BJ (cell line): ENCODE measurements at regions of chr7 and their contacts with region 1.

Region 1: GRCh38 chr7:98086281-98086718 is 20.4 kb upstream of the LMTK2 start:
- DNase-seq: no peak
- H3K4me3 ChIP-seq: no peak overlapping the region
- H3K27me3 ChIP-seq: no peaks in the 10 kb centered on the region
- CTCF ChIP-seq: no peak

Region 2: DNA sequence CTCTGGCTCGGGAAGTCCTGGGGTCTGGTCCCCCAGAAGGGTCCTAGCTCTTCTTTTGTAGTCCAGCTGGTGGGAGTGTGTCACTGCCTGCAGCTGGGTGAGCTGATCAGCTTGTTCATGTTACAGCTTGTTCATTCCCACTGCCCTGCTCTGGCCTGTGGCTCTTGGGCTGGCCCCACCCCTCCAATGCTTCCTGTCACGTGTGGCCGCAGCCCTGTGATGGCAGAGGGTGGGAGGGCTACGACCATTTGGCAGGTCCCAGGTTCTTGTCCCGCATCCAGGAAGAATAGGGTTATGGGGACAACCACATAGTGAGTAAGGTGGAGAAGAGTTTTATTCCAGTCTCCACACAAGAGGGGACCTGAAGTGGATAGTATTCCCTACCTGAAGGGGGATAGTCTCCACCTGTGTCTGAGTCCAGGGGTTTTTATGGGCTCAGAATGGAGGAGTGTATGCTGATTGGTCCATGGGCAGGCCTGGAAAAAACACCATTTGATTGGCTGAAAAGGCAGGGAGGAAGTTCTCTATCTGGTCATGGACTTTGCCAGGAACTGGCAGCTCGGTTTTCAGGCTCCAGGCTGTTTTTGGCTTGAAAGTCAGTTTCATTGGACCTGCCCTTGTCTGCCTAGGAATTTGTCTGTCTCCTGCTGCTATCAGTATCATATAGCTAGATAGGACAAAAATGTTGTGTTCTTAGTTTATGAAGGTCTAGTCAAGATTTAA is 955.7 kb before region 1 on chr7:
- CTCF ChIA-PET with region 1: no interaction called
- POLR2A ChIA-PET with region 1: interaction called, 23 read pairs
- DNase-seq: no peak
- H3K4me3 ChIP-seq: no peak overlapping the region
- H3K27me3 ChIP-seq: no peaks in the 10 kb centered on the region
- CTCF ChIP-seq: no peak

Region 3: GRCh38 chr7:98075801-98076200 is 10.5 kb before region 1 on chr7:
- CTCF ChIA-PET with region 1: no interaction called
- POLR2A ChIA-PET with region 1: no interaction called
- DNase-seq: no peak
- H3K4me3 ChIP-seq: no peak overlapping the region
- H3K27me3 ChIP-seq: no peaks in the 10 kb centered on the region
- CTCF ChIP-seq: no peak

Region 4: DNA sequence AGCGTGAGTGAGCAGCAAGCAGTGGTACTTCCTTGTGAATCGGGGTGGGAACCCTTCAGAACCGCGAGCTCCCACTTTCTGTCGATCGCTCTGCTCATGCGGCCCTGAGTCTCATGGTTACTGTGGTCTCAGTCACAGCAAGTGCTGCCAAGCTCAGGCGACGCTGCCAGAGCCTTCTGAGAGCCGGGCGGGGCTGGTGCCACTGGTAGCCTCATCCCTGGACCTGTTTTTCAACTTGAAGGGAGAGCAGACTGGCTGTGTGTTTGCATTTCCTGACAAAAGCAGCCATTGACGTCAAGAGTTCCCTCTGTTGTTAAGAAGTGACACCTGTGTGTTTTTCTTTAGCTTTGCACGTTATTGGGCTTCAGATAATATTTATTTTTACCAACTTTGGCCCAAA is 92.0 kb after region 1 on chr7:
- CTCF ChIA-PET with region 1: no interaction called
- POLR2A ChIA-PET with region 1: no interaction called
- DNase-seq: no peak
- H3K4me3 ChIP-seq: no peak overlapping the region
- H3K27me3 ChIP-seq: no peaks in the 10 kb centered on the region
- CTCF ChIP-seq: no peak

Region 5: GRCh38 chr7:98559958-98560357 is 473.7 kb after region 1 on chr7:
- CTCF ChIA-PET with region 1: no interaction called
- POLR2A ChIA-PET with region 1: no interaction called
- DNase-seq: no peak
- H3K4me3 ChIP-seq: no peak overlapping the region
- H3K27me3 ChIP-seq: no peaks in the 10 kb centered on the region
- CTCF ChIP-seq: no peak